HCT116 (cell line): ENCODE measurements at regions of chr1 and their contacts with region 1.

Region 1: GRCh38 chr1:84143796-84144565 is at the start of gene PRKACB:
- DNase-seq: no peak
- ATAC-seq: peak; percentile 35; the same call in 1 of the 2 replicates
- H3K4me3 ChIP-seq: peak within 1 kb of the TSS; percentile 4 to 16; a peak in 2 of 4 replicates
- H3K27ac ChIP-seq: peak within 1 kb of the TSS; percentile 89
- H3K4me1 ChIP-seq: peaks cover 75 to 82% of the 10 kb centered on the region in 2 experiments
- H3K27me3 ChIP-seq: no peaks in the 10 kb centered on the region
- CTCF ChIP-seq: no peak
- POLR2A ChIP-seq: no peak
- RAD21 ChIP-seq: peak; percentile 27; the same call in 1 of the 2 replicates
- total RNA-seq, gene PRKACB: 135 TPM

Region 2: GRCh38 chr1:84253891-84254290 is 109.9 kb after region 1 on chr1:
- CTCF ChIA-PET with region 1: no interaction called
- POLR2A ChIA-PET with region 1: interaction called, 3 read pairs
- RAD21 ChIA-PET with region 1: no interaction called
- intact Hi-C with region 1: loop called (anchors 5 kb)
- DNase-seq: peak; percentile 98
- ATAC-seq: peak; percentile 96
- H3K4me3 ChIP-seq: 0 out of 4 replicates have a peak overlapping the region, but pooled peaks of 1 of the 2 experiments have one; percentile 5
- H3K27ac ChIP-seq: peak overlapping the region; percentile 74
- H3K4me1 ChIP-seq: peaks cover 31 to 41% of the 10 kb centered on the region in 2 experiments
- H3K27me3 ChIP-seq: no peaks in the 10 kb centered on the region
- CTCF ChIP-seq: no peak
- POLR2A ChIP-seq: no peak
- RAD21 ChIP-seq: peak; percentile 62

Region 3: GRCh38 chr1:84492726-84493125 is 348.7 kb after region 1 on chr1:
- CTCF ChIA-PET with region 1: no interaction called
- POLR2A ChIA-PET with region 1: interaction called, 3 read pairs
- RAD21 ChIA-PET with region 1: no interaction called
- intact Hi-C with region 1: loop called (anchors 5 kb)
- DNase-seq: no peak
- ATAC-seq: no peak
- H3K4me3 ChIP-seq: no peak overlapping the region
- H3K27ac ChIP-seq: no peak overlapping the region
- H3K4me1 ChIP-seq: no peaks in the 10 kb centered on the region
- H3K27me3 ChIP-seq: no peaks in the 10 kb centered on the region
- CTCF ChIP-seq: no peak
- POLR2A ChIP-seq: no peak
- RAD21 ChIP-seq: no peak

Region 4: GRCh38 chr1:84573967-84574842 is 430.2 kb after region 1 on chr1 and contains the start of gene CTBS:
- CTCF ChIA-PET with region 1: interaction called, 5 read pairs
- POLR2A ChIA-PET with region 1: interaction called, 16 read pairs
- RAD21 ChIA-PET with region 1: no interaction called
- intact Hi-C with region 1: no loop called
- DNase-seq: peak; percentile 53
- ATAC-seq: peak; percentile 93
- H3K4me3 ChIP-seq: peak within 1 kb of the TSS; percentile 66 to 92
- H3K27ac ChIP-seq: peak within 1 kb of the TSS; percentile 98
- H3K4me1 ChIP-seq: peaks cover 14 to 44% of the 10 kb centered on the region in 2 experiments
- H3K27me3 ChIP-seq: no peaks in the 10 kb centered on the region
- CTCF ChIP-seq: no peak
- POLR2A ChIP-seq: peak; percentile 84
- RAD21 ChIP-seq: no peak; the same call in 1 of the 2 replicates
- total RNA-seq, gene CTBS: 19.5 TPM

Region 5: GRCh38 chr1:84753516-84754385 is 609.8 kb after region 1 on chr1:
- CTCF ChIA-PET with region 1: interaction called, 8 read pairs
- POLR2A ChIA-PET with region 1: no interaction called
- RAD21 ChIA-PET with region 1: interaction called in 1 of 2 experiments, 3 read pairs
- intact Hi-C with region 1: loop called (anchors 1 kb)
- DNase-seq: peak; percentile 43
- ATAC-seq: peak; percentile 96
- H3K4me3 ChIP-seq: no peak overlapping the region
- H3K27ac ChIP-seq: no peak overlapping the region
- H3K4me1 ChIP-seq: 0 out of 4 replicates have a peak, but pooled peaks cover 0 to 4% of the 10 kb centered on the region in 2 experiments
- H3K27me3 ChIP-seq: no peaks in the 10 kb centered on the region
- CTCF ChIP-seq: peak; percentile 89 to 99 (median 96)
- POLR2A ChIP-seq: no peak
- RAD21 ChIP-seq: peak; percentile 98